Dorsolateral prefrontal cortex (tissue), 120 donors: ENCODE measurements at regions of chr1 and their contacts with region 1.

Region 1: GRCh38 chr1:234851450-234852438 is 241.8 kb upstream of the IRF2BP2 start:
- DNase-seq: no peak
- H3K4me3 ChIP-seq: no peak overlapping the region
- H3K27ac ChIP-seq: no peak overlapping the region
- H3K27me3 ChIP-seq: no peaks in the 10 kb centered on the region
- CTCF ChIP-seq: no peak

Region 2: DNA sequence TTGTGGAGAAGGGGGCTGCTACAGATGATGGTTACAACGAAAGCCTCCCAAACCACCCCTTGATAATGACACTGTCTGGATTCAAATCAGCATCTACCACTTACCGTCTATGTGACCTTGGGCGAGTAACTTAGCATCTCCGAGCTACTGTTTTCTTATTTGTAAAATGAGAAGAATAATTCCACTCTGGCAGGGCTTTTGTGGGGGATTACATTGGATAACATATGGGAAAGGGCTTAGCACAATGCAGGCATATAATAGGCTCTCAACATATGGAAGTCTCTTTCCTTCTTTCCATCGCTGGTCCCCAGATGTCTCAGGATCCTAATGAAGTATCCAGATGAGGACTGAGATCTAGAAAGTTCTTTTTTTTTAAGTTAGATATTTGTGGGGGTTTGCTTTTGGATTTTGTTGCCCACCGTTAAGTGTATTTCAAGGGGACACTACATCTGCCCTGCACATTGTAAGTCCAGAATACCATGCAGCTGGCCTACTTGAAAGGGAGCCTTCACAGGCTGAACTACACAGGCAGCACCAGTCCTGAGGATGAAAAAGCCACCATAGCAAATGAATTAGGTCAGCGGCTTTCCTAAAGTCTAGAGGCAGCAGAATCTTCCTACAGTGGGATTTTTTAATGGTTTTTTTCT is 69.5 kb before region 1 on chr1:
- intact Hi-C with region 1: no loop called
- DNase-seq: no peak
- H3K4me3 ChIP-seq: no peak overlapping the region
- H3K27ac ChIP-seq: no peak overlapping the region
- H3K27me3 ChIP-seq: peaks cover 0 to 28% (median 0%) of the 10 kb centered on the region in 45 donors
- CTCF ChIP-seq: no peak

Region 3: GRCh38 chr1:235090401-235091069 is 238.8 kb after region 1 on chr1:
- intact Hi-C with region 1: loop called (anchors 5 to 10 kb)
- DNase-seq: peak in 1 of 10 donors; percentile 26
- H3K4me3 ChIP-seq: no peak overlapping the region
- H3K27ac ChIP-seq: peak overlapping the region in 4 of 59 donors; percentile 26 to 29 (median 28)
- H3K27me3 ChIP-seq: no peaks in the 10 kb centered on the region
- CTCF ChIP-seq: peak in 2 of 56 donors; percentile 14 to 19

Region 4: GRCh38 chr1:236089046-236089773 is 1237.5 kb after region 1 on chr1:
- intact Hi-C with region 1: no loop called
- DNase-seq: no peak
- H3K4me3 ChIP-seq: no peak overlapping the region
- H3K27ac ChIP-seq: no peak overlapping the region
- H3K27me3 ChIP-seq: peaks cover 0 to 9% (median 0%) of the 10 kb centered on the region in 45 donors
- CTCF ChIP-seq: no peak